ENCODE measurements at regions of chr6 and their contacts with region 1.

Region 1: GRCh38 chr6:45922728-45923351 is 92.8 kb downstream of the CLIC5 start:
- DNase-seq: peak; percentile 44 to 52 (median 47)
- H3K4me3 ChIP-seq: no peak overlapping the region
- H3K4me3 Mint-ChIP-seq: peak overlapping the region in 1 of 8 donors; percentile 11
- H3K27ac ChIP-seq: no peak overlapping the region
- H3K27ac Mint-ChIP-seq: peak overlapping the region in 2 of 7 donors; percentile 7 to 41
- H3K4me1 ChIP-seq: no peaks in the 10 kb centered on the region
- H3K4me1 Mint-ChIP-seq: peaks cover 4 to 13% (median 8%) of the 10 kb centered on the region in 4 donors
- H3K27me3 ChIP-seq: no peaks in the 10 kb centered on the region
- H3K27me3 Mint-ChIP-seq: no peaks in the 10 kb centered on the region

Region 2: DNA sequence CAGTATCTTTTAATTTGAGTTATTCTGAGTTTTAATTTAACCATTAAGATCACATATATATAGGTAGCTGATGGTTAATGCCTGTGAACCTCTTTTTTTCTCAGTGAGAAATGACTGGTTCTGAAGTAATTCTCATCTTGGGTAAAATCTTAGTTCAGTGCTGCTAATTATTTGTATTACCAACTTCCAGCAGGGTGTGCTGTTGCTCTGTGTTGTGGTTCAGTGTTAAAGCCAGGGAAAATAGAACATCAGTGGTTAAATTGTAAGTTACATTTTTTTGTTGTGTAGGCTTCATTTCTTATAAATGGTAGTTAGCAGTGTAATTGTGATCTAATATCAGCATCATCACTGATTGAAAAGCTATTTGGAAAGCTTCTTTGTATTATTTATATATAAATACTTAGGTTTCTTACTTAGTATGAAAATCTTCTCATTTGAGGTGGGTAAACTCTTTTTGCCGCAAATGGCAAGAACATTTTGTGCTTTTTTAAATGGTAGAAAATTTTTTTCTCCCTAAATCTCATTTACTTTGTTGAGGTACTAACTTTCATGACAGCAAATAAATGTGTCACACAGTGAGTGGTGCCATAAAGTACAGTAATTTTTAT is 1491.6 kb before region 1 on chr6:
- CTCF ChIA-PET with region 1: no interaction called
- POLR2A ChIA-PET with region 1: no interaction called
- intact Hi-C with region 1: loop called (anchors 2 kb)
- DNase-seq: peak; percentile 21 to 45 (median 33)
- H3K4me3 ChIP-seq: no peak overlapping the region
- H3K4me3 Mint-ChIP-seq: no peak overlapping the region
- H3K27ac ChIP-seq: no peak overlapping the region
- H3K27ac Mint-ChIP-seq: peak overlapping the region in 2 of 7 donors; percentile 36 to 55
- H3K4me1 ChIP-seq: no peaks in the 10 kb centered on the region
- H3K4me1 Mint-ChIP-seq: peaks cover 0 to 16% (median 8%) of the 10 kb centered on the region in 4 donors
- H3K27me3 ChIP-seq: no peaks in the 10 kb centered on the region
- H3K27me3 Mint-ChIP-seq: no peaks in the 10 kb centered on the region

Region 3: DNA sequence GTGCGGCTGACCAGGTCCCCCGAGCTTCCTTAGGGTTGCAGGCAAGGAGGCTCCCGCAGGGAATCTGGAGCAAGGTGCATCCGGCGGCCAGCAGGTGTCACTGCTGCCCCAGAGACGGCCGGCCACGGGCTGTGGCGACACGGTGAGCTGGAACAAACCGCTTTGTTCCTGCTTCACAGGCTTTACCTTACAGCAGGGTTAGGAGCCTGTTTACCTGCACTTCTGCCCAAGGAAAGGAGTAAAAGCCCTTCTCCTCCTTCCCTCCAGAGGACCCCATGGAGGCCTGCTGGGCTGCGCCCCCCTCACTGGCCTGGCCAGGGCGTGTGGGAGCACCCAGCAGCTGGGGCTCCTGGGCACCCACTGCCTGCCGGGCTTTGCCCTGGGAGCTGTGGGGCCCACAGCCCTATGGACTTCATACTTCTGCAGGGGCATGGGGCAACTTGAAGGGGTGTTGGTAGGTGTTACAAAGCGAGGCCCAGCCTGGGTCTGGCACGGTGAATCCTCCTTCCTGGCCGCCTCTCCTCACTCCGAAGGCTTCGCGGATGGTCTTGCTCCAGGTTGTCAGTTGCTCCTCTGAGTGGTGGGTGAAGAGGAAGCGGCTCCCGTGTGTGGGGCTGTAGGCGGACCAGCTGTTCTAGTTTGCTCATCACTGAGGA is 1446.9 kb before region 1 on chr6:
- CTCF ChIA-PET with region 1: interaction called, 45 read pairs
- POLR2A ChIA-PET with region 1: no interaction called
- intact Hi-C with region 1: no loop called
- DNase-seq: peak; percentile 47 to 66 (median 63)
- H3K4me3 ChIP-seq: no peak overlapping the region
- H3K4me3 Mint-ChIP-seq: no peak overlapping the region
- H3K27ac ChIP-seq: no peak overlapping the region
- H3K27ac Mint-ChIP-seq: no peak overlapping the region
- H3K4me1 ChIP-seq: peaks cover 6% of the 10 kb centered on the region
- H3K4me1 Mint-ChIP-seq: peaks cover 0 to 5% (median 2%) of the 10 kb centered on the region in 4 donors
- H3K27me3 ChIP-seq: no peaks in the 10 kb centered on the region
- H3K27me3 Mint-ChIP-seq: peaks cover 2 to 3% of the 10 kb centered on the region in 2 donors

Region 4: DNA sequence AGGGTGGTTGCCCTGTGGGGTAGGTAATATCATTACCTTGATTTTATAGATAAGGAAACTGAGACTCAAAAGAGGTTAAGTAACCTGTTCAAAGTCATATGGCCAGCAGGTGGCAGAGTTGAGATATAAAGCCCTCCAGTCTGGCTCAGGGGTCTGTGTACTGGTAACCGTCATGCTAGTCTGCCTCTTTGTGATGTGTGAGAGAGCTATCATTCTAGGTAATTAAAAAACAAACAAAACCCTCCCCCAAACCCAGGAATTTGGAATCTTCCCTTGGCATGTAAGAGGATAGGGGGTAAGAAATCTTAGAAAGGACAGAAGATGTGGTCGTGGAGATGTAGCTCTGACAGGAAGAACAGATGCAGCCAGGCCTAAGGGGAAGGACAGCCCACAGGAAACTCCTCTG is 1329.3 kb before region 1 on chr6:
- CTCF ChIA-PET with region 1: interaction called, 12 read pairs
- POLR2A ChIA-PET with region 1: no interaction called
- intact Hi-C with region 1: no loop called
- DNase-seq: peak; percentile 24 to 46 (median 36)
- H3K4me3 ChIP-seq: no peak overlapping the region
- H3K4me3 Mint-ChIP-seq: no peak overlapping the region
- H3K27ac ChIP-seq: no peak overlapping the region
- H3K27ac Mint-ChIP-seq: no peak overlapping the region
- H3K4me1 ChIP-seq: no peaks in the 10 kb centered on the region
- H3K4me1 Mint-ChIP-seq: peaks cover 0 to 3% (median 1%) of the 10 kb centered on the region in 4 donors
- H3K27me3 ChIP-seq: no peaks in the 10 kb centered on the region
- H3K27me3 Mint-ChIP-seq: peaks cover 6 to 11% of the 10 kb centered on the region in 2 donors

Region 5: DNA sequence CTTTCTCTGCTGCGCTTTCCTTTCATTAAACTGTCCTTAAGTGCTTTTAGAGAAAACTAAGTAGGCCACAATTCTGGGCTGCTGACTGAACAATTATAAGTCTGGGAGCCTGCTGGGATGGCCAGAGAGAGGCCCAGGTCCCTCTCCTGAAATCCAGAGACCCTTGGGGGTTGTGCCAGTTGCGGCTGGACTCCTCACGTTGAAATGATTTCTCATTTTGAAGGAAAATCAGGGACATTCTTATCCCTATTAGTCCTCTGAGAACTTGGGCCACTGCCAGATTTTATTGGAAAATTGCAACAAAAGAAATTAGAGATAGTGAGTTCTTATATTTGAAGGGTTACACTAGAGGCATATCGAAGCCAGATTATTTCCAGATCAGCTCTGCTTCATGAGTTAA is 52.3 kb before region 1 on chr6:
- CTCF ChIA-PET with region 1: no interaction called
- POLR2A ChIA-PET with region 1: no interaction called
- intact Hi-C with region 1: no loop called
- DNase-seq: no peak
- H3K4me3 ChIP-seq: no peak overlapping the region
- H3K4me3 Mint-ChIP-seq: no peak overlapping the region
- H3K27ac ChIP-seq: no peak overlapping the region
- H3K27ac Mint-ChIP-seq: no peak overlapping the region
- H3K4me1 ChIP-seq: no peaks in the 10 kb centered on the region
- H3K4me1 Mint-ChIP-seq: no peaks in the 10 kb centered on the region
- H3K27me3 ChIP-seq: no peaks in the 10 kb centered on the region
- H3K27me3 Mint-ChIP-seq: peaks cover 2 to 7% of the 10 kb centered on the region in 2 donors

Region 6: GRCh38 chr6:45903959-45904358 is 18.9 kb before region 1 on chr6:
- CTCF ChIA-PET with region 1: interaction called, 10 read pairs
- POLR2A ChIA-PET with region 1: no interaction called
- intact Hi-C with region 1: no loop called
- DNase-seq: no peak
- H3K4me3 ChIP-seq: no peak overlapping the region
- H3K4me3 Mint-ChIP-seq: no peak overlapping the region
- H3K27ac ChIP-seq: no peak overlapping the region
- H3K27ac Mint-ChIP-seq: no peak overlapping the region
- H3K4me1 ChIP-seq: no peaks in the 10 kb centered on the region
- H3K4me1 Mint-ChIP-seq: no peaks in the 10 kb centered on the region
- H3K27me3 ChIP-seq: no peaks in the 10 kb centered on the region
- H3K27me3 Mint-ChIP-seq: no peaks in the 10 kb centered on the region

Measured in CD4-positive, alpha-beta memory T cell (primary cell).